ENCODE measurements at regions of chr9 and their contacts with region 1.

Region 1: DNA sequence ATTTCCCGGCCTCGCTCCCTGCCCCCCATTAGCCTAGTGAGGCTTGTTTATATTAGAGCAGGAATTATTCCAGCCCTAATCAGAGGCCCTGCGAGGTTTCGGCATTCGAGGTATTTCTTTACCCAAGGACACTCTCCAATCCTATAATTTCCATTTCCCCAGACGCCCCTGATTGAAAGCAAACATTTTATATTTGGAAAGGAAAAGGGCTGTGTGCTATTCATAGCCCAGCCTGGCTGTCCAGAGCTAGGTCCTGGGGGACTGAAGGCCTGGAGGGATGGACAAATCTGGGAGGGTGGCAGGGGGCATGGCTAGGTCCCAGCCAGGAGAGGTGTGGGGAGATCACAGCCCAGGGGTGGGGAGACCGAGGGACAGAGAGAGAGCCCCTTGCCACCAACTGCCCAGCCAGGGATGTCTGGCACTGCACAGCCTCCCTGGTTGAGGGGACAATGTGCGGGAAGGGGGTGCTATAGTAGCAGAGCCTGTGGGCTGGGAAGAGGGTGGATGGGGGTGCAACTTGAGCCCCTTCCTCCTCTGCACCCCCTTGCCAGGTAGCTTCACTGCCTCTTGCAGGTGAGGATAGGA is 125.1 kb downstream of the BARX1 start:
- DNase-seq: no peak
- ATAC-seq: no peak
- H3K4me3 ChIP-seq: no peak overlapping the region
- H3K4me3 Mint-ChIP-seq: no peak overlapping the region
- H3K27ac ChIP-seq: no peak overlapping the region
- H3K27ac Mint-ChIP-seq: no peak overlapping the region
- H3K4me1 ChIP-seq: peaks cover 0 to 15% of the 10 kb centered on the region in 2 experiments
- H3K4me1 Mint-ChIP-seq: peaks cover 10 to 15% (median 10%) of the 10 kb centered on the region in 3 donors
- H3K27me3 ChIP-seq: peaks cover 5 to 59% of the 10 kb centered on the region in 2 experiments
- H3K27me3 Mint-ChIP-seq: peaks cover 40 to 49% of the 10 kb centered on the region in 2 donors

Region 2: DNA sequence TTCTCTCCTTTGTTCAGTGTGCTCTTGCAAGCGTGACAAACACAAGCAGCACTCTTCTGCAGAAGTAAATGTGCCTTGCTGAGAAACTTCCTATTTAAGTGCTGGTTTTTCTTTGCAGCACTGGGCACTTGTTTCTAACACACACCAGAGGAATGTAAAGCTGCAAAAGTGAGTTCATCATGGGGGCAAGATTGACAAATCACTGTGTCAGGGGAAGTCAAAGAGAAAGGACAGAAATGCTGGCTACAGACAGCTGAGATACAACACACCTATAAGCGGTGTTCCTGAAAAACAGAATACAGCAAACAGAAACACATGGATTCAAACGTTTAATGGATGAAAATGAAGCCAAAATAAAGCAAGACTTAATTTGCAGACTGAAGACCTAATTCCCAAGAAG is 1899.6 kb before region 1 on chr9:
- CTCF ChIA-PET with region 1: no interaction called
- POLR2A ChIA-PET with region 1: no interaction called
- DNase-seq: no peak
- ATAC-seq: no peak
- H3K4me3 ChIP-seq: peak overlapping the region in 1 of 2 donors; percentile 26
- H3K4me3 Mint-ChIP-seq: no peak overlapping the region
- H3K27ac ChIP-seq: no peak overlapping the region
- H3K27ac Mint-ChIP-seq: no peak overlapping the region
- H3K4me1 ChIP-seq: no peaks in the 10 kb centered on the region
- H3K4me1 Mint-ChIP-seq: no peaks in the 10 kb centered on the region
- H3K27me3 ChIP-seq: peaks cover 0 to 9% of the 10 kb centered on the region in 2 experiments
- H3K27me3 Mint-ChIP-seq: peaks cover 2% of the 10 kb centered on the region in 2 donors

Region 3: GRCh38 chr9:93916358-93916757 is 86.3 kb after region 1 on chr9:
- CTCF ChIA-PET with region 1: interaction called in 1 of 2 experiments, 11 read pairs
- POLR2A ChIA-PET with region 1: no interaction called
- DNase-seq: no peak
- ATAC-seq: no peak
- H3K4me3 ChIP-seq: no peak overlapping the region
- H3K4me3 Mint-ChIP-seq: no peak overlapping the region
- H3K27ac ChIP-seq: no peak overlapping the region
- H3K27ac Mint-ChIP-seq: no peak overlapping the region
- H3K4me1 ChIP-seq: peaks cover 0 to 3% of the 10 kb centered on the region in 2 experiments
- H3K4me1 Mint-ChIP-seq: peaks cover 0 to 2% (median 0%) of the 10 kb centered on the region in 3 donors
- H3K27me3 ChIP-seq: peaks cover 0 to 9% of the 10 kb centered on the region in 2 experiments
- H3K27me3 Mint-ChIP-seq: peaks cover 0 to 2% of the 10 kb centered on the region in 2 donors